Transverse colon (tissue), 4 donors: ENCODE measurements at regions of chr3 and their contacts with region 1.

Region 1: DNA sequence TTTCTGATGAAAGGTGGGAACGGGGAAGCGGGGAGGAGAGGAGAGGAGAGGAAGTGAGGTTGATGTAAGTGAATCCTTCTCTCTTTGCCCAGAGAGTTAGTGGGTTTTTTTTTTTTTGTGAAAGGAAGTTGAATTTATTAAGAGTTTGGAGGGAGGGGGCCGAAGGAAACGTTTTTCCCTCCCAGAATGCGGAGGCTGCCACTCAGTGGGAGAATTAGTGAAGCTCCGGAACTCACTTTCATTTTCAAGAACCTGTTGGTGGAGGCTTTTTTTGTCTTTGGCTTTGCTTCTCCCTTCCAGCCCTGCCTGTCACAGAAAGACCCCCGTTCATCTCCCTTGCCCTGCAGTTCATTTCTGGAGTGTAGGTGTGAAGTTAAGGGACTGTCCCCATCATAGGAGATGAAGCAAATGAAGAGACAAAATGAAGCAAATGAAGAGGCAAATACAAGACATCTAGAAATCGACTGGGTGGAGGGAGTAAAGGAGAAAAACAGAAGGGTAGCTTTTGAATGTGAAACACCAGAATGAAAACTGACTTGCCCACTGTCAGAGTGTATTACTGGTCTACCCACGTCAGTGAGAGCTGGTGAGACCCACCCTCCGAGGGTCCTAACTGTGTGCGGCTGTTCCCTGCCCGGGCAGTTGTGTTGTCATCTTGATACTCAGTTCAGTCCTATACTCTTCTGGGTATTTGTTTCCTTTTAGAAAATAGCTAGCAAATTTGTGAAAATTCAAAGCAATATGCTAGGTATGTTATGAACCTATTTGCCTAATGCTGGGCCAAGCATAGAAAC is 91.5 kb downstream of the ITPR1 start:
- DNase-seq: peak; percentile 15
- H3K4me3 ChIP-seq: peak overlapping the region in 3 of 4 donors; percentile 15 to 40 (median 16)
- H3K27ac ChIP-seq: peak overlapping the region; percentile 72 to 84 (median 76)
- H3K4me1 ChIP-seq: peaks cover 7 to 55% (median 23%) of the 10 kb centered on the region in 4 donors
- H3K27me3 ChIP-seq: no peaks in the 10 kb centered on the region
- CTCF ChIP-seq: peak in 1 of 5 experiments; percentile 5
- EP300 ChIP-seq: no peak
- POLR2A ChIP-seq: no peak

Region 2: GRCh38 chr3:4207672-4208071 is 377.0 kb before region 1 on chr3:
- in situ Hi-C with region 1: no loop called
- intact Hi-C with region 1: no loop called
- DNase-seq: no peak
- H3K4me3 ChIP-seq: no peak overlapping the region
- H3K27ac ChIP-seq: no peak overlapping the region
- H3K4me1 ChIP-seq: peaks cover 0 to 5% (median 0%) of the 10 kb centered on the region in 4 donors
- H3K27me3 ChIP-seq: no peaks in the 10 kb centered on the region
- CTCF ChIP-seq: no peak
- EP300 ChIP-seq: no peak
- POLR2A ChIP-seq: no peak

Region 3: DNA sequence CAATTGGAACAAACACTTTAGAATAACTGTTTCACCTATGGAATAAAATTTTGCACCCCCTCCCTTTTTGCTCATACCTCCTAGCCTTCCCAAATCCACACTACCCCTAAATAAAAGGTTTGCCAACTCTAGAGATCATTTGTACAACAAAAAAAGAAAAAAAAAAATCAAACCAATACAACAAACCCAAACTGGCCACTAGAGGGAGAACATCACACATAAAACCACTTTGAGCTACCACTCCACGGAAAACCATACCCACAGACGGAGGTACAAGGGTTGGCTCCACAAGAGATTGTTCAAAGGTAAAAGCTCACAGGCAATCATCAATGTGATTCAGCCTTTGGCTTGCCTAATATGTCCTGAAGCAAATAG is 233.9 kb before region 1 on chr3:
- in situ Hi-C with region 1: no loop called
- intact Hi-C with region 1: no loop called
- DNase-seq: peak; percentile 16
- H3K4me3 ChIP-seq: peak overlapping the region in 1 of 4 donors; percentile 2
- H3K27ac ChIP-seq: peak overlapping the region in 1 of 4 donors; percentile 52
- H3K4me1 ChIP-seq: peaks cover 0 to 4% (median 3%) of the 10 kb centered on the region in 4 donors
- H3K27me3 ChIP-seq: no peaks in the 10 kb centered on the region
- CTCF ChIP-seq: peak; percentile 75 to 82 (median 78)
- EP300 ChIP-seq: no peak
- POLR2A ChIP-seq: no peak

Region 4: DNA sequence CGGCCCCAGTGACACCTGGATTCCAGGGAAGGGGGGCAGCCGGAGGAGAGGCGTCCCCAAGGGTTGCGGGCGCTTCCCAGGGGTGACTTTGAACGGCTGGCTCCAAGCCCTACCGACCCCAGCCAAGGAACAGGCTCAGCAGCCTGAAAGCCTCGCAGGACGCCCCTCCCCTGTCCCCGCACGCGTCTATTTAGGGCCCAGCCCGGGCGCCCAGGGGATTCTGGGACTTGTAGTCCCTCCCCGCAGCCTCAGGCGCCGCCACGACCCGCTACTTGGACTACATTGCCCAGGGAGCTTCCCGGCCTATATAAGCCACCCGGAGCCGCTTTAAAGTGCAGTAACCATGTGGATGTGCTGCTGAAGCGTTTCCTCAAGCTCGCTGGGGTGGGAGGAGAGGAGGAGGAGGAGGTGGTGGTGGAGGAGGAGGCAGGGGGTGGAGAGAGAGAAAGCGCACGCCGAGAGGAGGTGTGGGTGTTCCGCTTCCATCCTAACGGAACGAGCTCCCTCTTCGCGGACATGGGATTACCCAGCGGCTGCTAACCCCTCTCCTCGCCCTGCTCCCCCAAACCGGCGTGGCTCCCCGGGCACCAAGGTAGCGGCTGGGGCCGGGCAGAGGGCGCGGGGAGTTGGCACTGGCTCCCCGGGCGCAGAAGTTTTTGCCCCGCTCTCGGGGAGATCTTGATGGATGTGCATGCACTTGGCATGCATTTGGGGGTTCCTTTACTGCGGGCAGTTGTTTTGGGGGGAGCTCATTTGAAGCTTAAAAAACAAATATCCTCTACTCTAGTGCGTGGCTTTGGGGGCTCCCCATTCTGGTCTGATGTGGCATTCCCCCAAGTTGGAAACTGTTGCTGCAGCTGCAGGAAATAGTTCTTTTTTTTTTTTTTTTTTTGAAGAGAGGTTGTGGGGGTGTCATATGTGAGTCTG is 91.4 kb before region 1 on chr3 and contains the start of gene ITPR1:
- in situ Hi-C with region 1: no loop called
- intact Hi-C with region 1: loop called (anchors 5 kb)
- DNase-seq: peak; percentile 97
- H3K4me3 ChIP-seq: peak within 1 kb of the TSS; percentile 68 to 86 (median 72)
- H3K27ac ChIP-seq: peak within 1 kb of the TSS; percentile 83 to 91 (median 90)
- H3K4me1 ChIP-seq: peaks cover 0 to 35% (median 14%) of the 10 kb centered on the region in 4 donors
- H3K27me3 ChIP-seq: no peaks in the 10 kb centered on the region
- CTCF ChIP-seq: no peak
- EP300 ChIP-seq: no peak
- POLR2A ChIP-seq: peak; percentile 99
- total RNA-seq, gene ITPR1: 15.3 to 50.2 (median 28.7) TPM